T-cell (primary cell): ENCODE measurements at regions of chr6 and their contacts with region 1.

Region 1: DNA sequence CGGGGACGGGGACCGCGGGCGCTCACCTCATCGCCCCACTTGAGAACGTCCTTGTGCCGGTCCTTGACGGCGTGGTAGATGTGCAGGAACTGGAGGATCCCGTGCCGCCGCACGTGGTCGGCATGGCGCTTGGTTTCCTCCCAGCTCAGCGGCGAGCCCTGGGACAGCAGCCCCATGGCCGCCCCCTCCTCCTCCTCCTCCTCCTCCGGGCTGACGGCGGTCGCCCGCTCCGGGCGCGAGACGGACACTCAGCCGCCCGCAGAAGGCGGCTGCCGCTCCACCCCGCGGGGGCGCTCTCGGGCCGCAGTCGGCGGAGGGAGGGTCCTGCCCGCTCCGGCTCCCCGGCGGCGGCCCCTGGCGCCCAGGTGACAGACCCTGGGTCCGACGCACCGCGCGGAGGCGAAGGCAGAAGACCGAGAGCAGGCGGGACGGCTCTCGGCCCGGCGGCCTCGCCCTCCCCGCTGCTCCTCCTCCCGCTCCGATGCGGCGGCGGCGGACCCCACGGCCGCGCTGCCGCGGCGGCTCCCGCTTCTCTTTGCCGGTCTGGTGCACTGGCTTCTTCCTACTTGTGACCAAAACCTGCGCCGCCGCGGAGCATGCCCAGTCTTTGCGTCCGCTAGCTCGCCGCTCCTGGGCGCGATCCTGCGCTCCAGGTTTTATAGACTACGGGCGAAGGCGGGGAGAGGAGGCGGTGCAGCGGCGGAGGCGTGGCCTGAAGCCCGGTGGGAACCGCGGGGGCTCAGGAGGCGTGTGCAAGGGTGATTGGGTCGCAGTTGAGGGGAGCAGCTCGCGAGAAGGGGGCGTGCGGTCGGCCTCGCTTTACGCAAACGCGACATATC is at the start of gene GCLC:
- DNase-seq: peak; percentile 65 to 93 (median 78)
- ATAC-seq: peak; percentile 66 to 70 (median 68)
- H3K4me3 ChIP-seq: peak within 1 kb of the TSS; percentile 63 to 80
- H3K4me3 Mint-ChIP-seq: peak within 1 kb of the TSS; percentile 89 to 97 (median 94)
- H3K27ac ChIP-seq: no peak within 1 kb of the TSS
- H3K27ac Mint-ChIP-seq: peak within 1 kb of the TSS; percentile 90 to 93
- H3K4me1 ChIP-seq: peaks cover 19 to 34% of the 10 kb centered on the region in 2 experiments
- H3K4me1 Mint-ChIP-seq: peaks cover 61 to 68% (median 67%) of the 10 kb centered on the region in 3 donors
- H3K27me3 ChIP-seq: no peaks in the 10 kb centered on the region
- H3K27me3 Mint-ChIP-seq: no peaks in the 10 kb centered on the region
- total RNA-seq, gene GCLC: 25.2 to 38.2 (median 33.6) TPM

Region 2: GRCh38 chr6:53651764-53652401 is 107.2 kb after region 1 on chr6:
- CTCF ChIA-PET with region 1: interaction called in 1 of 2 experiments, 12 read pairs
- POLR2A ChIA-PET with region 1: no interaction called
- DNase-seq: peak; percentile 60 to 87 (median 75)
- ATAC-seq: peak; percentile 91 to 94 (median 91)
- H3K4me3 ChIP-seq: peak overlapping the region; percentile 60 to 84
- H3K4me3 Mint-ChIP-seq: peak overlapping the region; percentile 85 to 96 (median 95)
- H3K27ac ChIP-seq: peak overlapping the region; percentile 60
- H3K27ac Mint-ChIP-seq: peak overlapping the region; percentile 90 to 95
- H3K4me1 ChIP-seq: peaks cover 6 to 16% of the 10 kb centered on the region in 2 experiments
- H3K4me1 Mint-ChIP-seq: peaks cover 21 to 35% (median 28%) of the 10 kb centered on the region in 3 donors
- H3K27me3 ChIP-seq: peaks cover 4 to 5% of the 10 kb centered on the region in 2 experiments
- H3K27me3 Mint-ChIP-seq: no peaks in the 10 kb centered on the region

Region 3: DNA sequence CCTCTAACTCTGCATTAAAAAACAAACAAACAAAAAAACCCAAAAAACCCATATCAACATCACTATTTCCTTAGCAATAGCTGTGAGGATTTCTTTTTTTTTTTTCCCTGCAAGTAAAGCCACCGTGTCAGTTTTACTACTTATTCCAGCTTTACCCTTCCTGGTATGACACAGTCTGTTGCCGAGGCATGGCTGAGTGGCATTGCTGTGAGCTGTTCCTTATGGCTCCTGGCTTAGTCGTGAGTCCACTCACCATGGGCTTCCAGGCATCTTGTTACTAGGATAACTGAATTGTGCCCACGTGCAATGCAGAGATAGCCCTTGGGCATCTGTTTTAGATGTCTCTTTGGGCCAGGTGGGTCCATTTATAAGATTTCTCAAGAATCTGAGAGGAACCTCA is 334.9 kb after region 1 on chr6:
- CTCF ChIA-PET with region 1: no interaction called
- POLR2A ChIA-PET with region 1: no interaction called
- DNase-seq: no peak
- ATAC-seq: no peak
- H3K4me3 ChIP-seq: no peak overlapping the region
- H3K4me3 Mint-ChIP-seq: no peak overlapping the region
- H3K27ac ChIP-seq: no peak overlapping the region
- H3K27ac Mint-ChIP-seq: no peak overlapping the region
- H3K4me1 ChIP-seq: no peaks in the 10 kb centered on the region
- H3K4me1 Mint-ChIP-seq: no peaks in the 10 kb centered on the region
- H3K27me3 ChIP-seq: no peaks in the 10 kb centered on the region
- H3K27me3 Mint-ChIP-seq: no peaks in the 10 kb centered on the region

Region 4: DNA sequence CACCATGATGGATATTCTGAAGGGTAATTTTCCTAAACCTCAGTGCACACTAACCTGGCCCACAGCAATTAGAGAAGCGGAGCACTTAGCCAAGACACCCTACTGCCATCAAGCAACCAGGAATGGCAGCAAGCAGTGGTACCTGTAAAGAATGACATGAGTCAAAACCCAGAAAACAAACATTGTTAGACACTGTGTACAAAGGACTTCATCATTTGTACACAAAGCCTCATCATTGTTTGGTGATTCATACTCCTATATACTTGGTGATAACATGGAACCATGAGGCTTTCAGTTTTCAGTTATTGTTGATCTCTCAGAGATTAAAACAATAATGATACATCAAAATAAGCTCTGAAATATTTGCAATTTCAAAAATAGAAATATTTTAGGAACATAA is 641.2 kb after region 1 on chr6:
- CTCF ChIA-PET with region 1: no interaction called
- POLR2A ChIA-PET with region 1: no interaction called
- DNase-seq: no peak
- ATAC-seq: no peak
- H3K4me3 ChIP-seq: no peak overlapping the region
- H3K4me3 Mint-ChIP-seq: no peak overlapping the region
- H3K27ac ChIP-seq: no peak overlapping the region
- H3K27ac Mint-ChIP-seq: no peak overlapping the region
- H3K4me1 ChIP-seq: no peaks in the 10 kb centered on the region
- H3K4me1 Mint-ChIP-seq: no peaks in the 10 kb centered on the region
- H3K27me3 ChIP-seq: no peaks in the 10 kb centered on the region
- H3K27me3 Mint-ChIP-seq: no peaks in the 10 kb centered on the region